ENCODE measurements at regions of chr14 and their contacts with region 1.

Region 1: DNA sequence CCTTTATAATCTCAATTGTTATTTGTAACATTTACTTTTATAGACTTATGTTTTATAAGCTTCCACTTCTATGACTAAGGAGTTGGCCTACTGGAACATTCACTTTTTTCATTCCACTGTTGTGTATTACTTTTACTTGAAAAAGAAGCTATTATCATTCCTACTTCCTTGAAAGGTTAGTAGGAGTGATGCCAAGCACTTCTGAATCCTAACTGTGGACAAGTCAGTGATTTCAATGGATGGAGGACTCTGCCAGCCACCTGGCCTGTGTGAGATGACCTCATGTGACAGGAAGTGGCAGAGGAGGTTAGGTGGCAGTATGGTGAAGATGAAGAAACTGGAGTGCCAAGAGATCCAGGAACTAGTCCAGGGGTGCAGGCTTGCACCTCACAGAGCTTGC is 46.0 kb downstream of the TECPR2 start:
- DNase-seq: no peak
- ATAC-seq: peak; percentile 80 to 87 (median 84)
- H3K4me3 ChIP-seq: no peak overlapping the region
- H3K27ac ChIP-seq: peak overlapping the region; percentile 80
- H3K4me1 ChIP-seq: peaks cover 23% of the 10 kb centered on the region
- H3K27me3 ChIP-seq: no peaks in the 10 kb centered on the region
- CTCF ChIP-seq: no peak

Region 2: GRCh38 chr14:102362545-102363181 is 46.1 kb before region 1 on chr14 and contains the starts of genes CINP and TECPR2:
- intact Hi-C with region 1: loop called (anchors 2 to 5 kb)
- DNase-seq: peak; percentile 99
- ATAC-seq: peak; percentile 96 to 98 (median 98)
- H3K4me3 ChIP-seq: peak within 1 kb of the TSS; percentile 88
- H3K27ac ChIP-seq: peak within 1 kb of the TSS; percentile 94
- H3K4me1 ChIP-seq: peaks cover 29% of the 10 kb centered on the region
- H3K27me3 ChIP-seq: no peaks in the 10 kb centered on the region
- CTCF ChIP-seq: no peak
- total RNA-seq, gene CINP: 27.8 to 40.1 (median 32.5) TPM
- total RNA-seq, gene TECPR2: 12.9 to 22.5 (median 18.4) TPM